Activated B cell treated with CpG ODN at 0.5 μM for 24 hours (primary cell): ENCODE measurements at regions of chr12 and their contacts with region 1.

Region 1: GRCh38 chr12:25130741-25131188 is 64.2 kb downstream of the DNAI7 start:
- DNase-seq: no peak
- ATAC-seq: peak; percentile 54
- H3K4me3 Mint-ChIP-seq: no peak overlapping the region
- H3K27ac Mint-ChIP-seq: no peak overlapping the region
- H3K4me1 Mint-ChIP-seq: peaks cover 7% of the 10 kb centered on the region
- H3K27me3 Mint-ChIP-seq: no peaks in the 10 kb centered on the region
- CTCF ChIP-seq: no peak

Region 2: GRCh38 chr12:23204933-23205778 is 1925.6 kb before region 1 on chr12:
- CTCF ChIA-PET with region 1: no interaction called
- POLR2A ChIA-PET with region 1: no interaction called
- intact Hi-C with region 1: loop called (anchors 5 kb)
- DNase-seq: no peak
- ATAC-seq: peak; percentile 92
- H3K4me3 Mint-ChIP-seq: no peak overlapping the region
- H3K27ac Mint-ChIP-seq: no peak overlapping the region
- H3K4me1 Mint-ChIP-seq: no peaks in the 10 kb centered on the region
- H3K27me3 Mint-ChIP-seq: peaks cover 5% of the 10 kb centered on the region
- CTCF ChIP-seq: peak; percentile 68

Region 3: DNA sequence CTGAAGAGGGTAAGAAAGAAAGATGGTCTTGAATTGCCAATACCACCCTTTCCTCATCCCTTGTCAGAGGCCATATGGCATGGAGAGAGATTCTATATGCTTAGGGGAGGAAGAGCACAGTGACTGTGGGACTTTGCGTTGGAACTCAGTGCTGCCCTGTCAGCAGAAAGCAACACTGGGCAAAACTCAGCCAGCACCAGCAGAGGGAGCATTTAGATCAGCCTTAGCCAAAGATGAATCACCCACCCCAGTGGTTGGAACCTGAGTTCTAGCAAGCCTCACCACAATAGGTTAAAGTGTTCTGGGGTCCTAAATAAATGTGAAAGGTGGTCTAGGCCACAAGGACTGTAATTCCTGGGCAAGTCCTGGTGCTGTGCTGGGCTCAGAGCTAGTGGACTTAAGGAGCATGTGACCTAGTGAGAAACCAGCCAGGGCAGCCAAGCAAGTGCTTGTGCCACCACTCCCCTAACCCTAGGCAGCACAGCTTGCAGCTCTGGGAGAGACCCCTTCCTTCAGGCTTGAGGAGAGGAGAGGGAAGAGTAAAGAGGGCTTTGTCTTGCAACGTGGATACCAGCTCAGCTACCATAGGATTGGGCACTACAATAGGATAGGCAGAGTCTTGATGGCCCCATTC is 170.4 kb before region 1 on chr12:
- CTCF ChIA-PET with region 1: interaction called, 3 read pairs
- POLR2A ChIA-PET with region 1: no interaction called
- intact Hi-C with region 1: loop called (anchors 1 kb)
- DNase-seq: no peak
- ATAC-seq: peak; percentile 79
- H3K4me3 Mint-ChIP-seq: no peak overlapping the region
- H3K27ac Mint-ChIP-seq: no peak overlapping the region
- H3K4me1 Mint-ChIP-seq: peaks cover 14% of the 10 kb centered on the region
- H3K27me3 Mint-ChIP-seq: no peaks in the 10 kb centered on the region
- CTCF ChIP-seq: no peak

Region 4: DNA sequence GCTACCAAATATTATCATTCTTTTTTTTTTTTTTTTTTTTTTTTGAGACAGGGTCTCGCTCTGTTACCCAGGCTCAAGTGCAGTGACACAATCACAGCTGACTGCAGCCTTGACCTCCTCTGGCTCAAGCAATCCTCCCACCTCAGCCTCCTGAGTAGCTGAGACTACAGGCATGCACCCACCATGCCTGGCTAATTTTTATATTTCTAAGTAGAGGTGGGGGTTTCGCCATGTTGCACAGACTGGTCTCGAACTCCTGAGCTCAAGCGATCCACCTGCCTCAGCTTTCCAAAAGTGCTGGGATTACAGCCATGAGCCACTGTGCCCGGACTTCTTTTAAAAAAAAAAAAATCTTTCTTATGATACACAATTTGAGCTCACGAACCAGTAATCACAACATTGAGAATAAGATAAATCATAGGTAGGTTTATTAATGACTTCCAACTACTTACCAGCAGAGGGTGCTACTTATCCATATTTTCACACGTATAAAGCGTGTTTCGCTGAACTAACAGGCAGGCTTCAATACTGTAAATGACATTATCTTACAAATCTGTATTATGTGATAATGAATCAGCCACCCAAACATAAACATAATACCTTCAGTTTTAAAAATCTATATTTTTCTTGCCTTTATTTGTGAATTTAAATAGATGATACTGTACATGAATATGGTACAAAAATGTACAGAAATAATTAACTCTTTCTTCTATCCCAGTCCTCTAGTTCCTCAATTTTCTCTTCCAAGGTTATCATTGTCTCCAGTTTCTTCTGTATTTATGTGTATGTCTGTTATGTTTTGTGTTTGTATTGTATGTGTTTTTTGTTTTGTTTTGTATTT is 139.3 kb before region 1 on chr12:
- CTCF ChIA-PET with region 1: interaction called, 117 read pairs
- POLR2A ChIA-PET with region 1: interaction called, 6 read pairs
- intact Hi-C with region 1: loop called (anchors 1 kb)
- DNase-seq: no peak
- ATAC-seq: peak; percentile 65
- H3K4me3 Mint-ChIP-seq: no peak overlapping the region
- H3K27ac Mint-ChIP-seq: no peak overlapping the region
- H3K4me1 Mint-ChIP-seq: peaks cover 46% of the 10 kb centered on the region
- H3K27me3 Mint-ChIP-seq: no peaks in the 10 kb centered on the region
- CTCF ChIP-seq: no peak

Region 5: GRCh38 chr12:25386831-25387731 is 256.3 kb after region 1 on chr12:
- CTCF ChIA-PET with region 1: interaction called, 8 read pairs
- POLR2A ChIA-PET with region 1: no interaction called
- intact Hi-C with region 1: loop called (anchors 1 kb)
- DNase-seq: peak; percentile 45
- ATAC-seq: peak; percentile 11
- H3K4me3 Mint-ChIP-seq: peak overlapping the region; percentile 97
- H3K27ac Mint-ChIP-seq: peak overlapping the region; percentile 100
- H3K4me1 Mint-ChIP-seq: peaks cover 34% of the 10 kb centered on the region
- H3K27me3 Mint-ChIP-seq: no peaks in the 10 kb centered on the region
- CTCF ChIP-seq: peak; percentile 62

Region 6: DNA sequence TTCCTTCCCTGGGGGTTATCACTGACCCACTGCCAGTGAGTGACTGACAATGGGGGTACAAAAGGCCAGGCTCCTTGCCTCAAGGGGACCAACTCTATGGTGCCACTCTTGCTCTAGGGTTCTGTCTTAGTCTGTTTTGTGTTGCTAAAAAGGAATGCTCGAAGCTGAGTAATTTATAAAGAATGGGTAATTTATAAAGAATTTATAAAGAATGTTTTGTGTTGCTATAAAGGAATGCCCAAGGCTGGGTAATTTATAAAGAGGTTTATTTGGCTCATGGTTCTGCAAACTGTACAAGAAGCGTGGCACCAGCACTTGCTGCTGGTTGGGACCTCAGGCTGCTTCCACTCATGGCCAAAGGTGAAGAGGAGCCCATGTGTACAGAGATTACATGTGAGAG is 811.9 kb after region 1 on chr12:
- CTCF ChIA-PET with region 1: no interaction called
- POLR2A ChIA-PET with region 1: no interaction called
- intact Hi-C with region 1: no loop called
- DNase-seq: no peak
- ATAC-seq: no peak
- H3K4me3 Mint-ChIP-seq: no peak overlapping the region
- H3K27ac Mint-ChIP-seq: no peak overlapping the region
- H3K4me1 Mint-ChIP-seq: peaks cover 7% of the 10 kb centered on the region
- H3K27me3 Mint-ChIP-seq: peaks cover 5% of the 10 kb centered on the region
- CTCF ChIP-seq: no peak